Mammary epithelial cell (primary cell): ENCODE measurements at regions of chr9 and their contacts with region 1.

Region 1: DNA sequence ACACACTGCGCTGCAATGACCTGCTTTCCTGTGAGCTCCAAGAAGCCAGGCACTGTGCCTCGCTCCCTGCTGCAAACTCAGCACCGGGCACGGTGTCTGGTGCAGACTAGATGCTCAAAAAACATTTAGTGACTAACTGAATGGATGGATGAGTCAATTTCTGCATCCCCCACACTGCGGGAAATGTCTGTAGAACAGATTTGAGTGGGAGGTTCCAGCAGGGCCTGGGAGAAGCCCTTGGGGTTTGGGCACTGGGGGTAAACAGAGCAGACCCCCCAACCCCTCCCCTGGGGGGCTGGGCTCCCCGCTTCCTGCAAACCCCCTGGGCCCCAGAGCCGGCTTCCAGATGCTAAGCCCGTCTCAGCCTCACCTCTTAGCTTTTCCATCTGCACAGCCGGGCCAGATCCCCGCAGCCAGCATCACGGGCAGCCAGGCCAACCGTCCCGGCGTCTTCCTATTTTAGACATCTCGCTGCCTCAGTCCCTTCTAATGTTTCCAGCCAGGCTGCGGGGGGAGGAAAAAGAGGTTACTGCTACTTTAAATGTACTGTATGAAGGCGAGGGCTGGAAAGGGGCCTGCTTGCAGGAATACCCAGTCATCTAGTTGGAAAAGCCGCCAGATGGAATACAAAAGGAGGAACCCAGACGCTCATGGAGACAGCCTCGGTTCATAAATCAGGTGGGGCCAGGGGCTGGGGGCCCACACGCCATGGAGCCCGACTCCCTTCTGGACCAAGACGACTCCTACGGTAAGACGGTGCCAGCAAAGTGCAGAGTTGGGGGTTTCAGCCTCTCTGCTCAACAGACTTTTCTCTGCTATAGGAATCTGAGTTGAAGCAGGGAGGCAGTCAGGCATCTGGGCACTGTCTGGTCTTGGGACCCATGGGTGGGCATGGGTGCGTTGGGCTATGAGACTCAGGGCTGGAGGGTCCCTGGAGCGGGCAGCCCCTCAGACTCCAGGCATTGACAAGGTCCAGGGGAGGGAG is 67.1 kb upstream of the GGTA1 start:
- DNase-seq: peak; percentile 50
- H3K4me3 ChIP-seq: no peak overlapping the region
- H3K27ac ChIP-seq: no peak overlapping the region
- H3K4me1 ChIP-seq: peaks cover 11% of the 10 kb centered on the region
- H3K27me3 ChIP-seq: no peaks in the 10 kb centered on the region
- CTCF ChIP-seq: no peak

Region 2: DNA sequence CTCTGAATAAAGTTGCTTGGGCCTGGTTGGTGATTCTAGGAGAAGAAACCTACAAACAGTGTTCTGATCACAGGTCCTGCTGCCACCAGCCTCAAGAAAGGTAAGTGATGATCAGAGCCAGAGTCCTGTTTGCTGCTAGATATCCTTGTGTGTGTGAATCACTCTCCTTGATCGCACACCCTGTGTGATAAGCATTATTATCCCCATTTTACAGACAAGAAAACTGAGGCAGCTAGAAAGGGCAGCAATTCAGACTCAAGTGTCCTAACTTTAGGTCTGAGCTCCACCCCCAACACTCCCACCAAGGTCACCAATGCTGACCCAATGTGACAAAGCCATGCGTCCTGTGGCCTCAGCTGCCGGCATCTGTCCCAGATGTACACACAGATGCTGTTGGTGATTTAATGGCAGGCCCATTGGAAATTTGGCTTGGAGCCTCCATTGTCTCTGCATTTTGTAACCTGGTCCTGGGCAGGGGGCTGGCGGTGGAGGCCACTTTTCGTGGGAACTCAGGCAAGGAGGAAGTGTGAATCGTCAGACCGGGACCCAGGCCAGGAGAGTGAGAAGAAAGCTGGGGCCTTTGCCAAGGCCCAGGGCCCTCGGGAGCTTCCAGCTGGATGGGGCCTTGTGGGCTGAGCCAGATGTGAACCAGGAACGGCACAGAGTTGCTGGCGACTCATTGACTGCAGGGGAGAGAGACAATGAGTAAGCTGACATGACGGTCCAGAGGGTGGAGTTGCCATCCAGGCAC is 37.4 kb before region 1 on chr9:
- CTCF ChIA-PET with region 1: no interaction called
- dilution Hi-C with region 1: loop called (anchors 5 kb)
- in situ Hi-C with region 1: no loop called
- intact Hi-C with region 1: no loop called
- DNase-seq: peak; percentile 77
- H3K4me3 ChIP-seq: no peak overlapping the region
- H3K27ac ChIP-seq: no peak overlapping the region
- H3K4me1 ChIP-seq: peaks cover 6% of the 10 kb centered on the region
- H3K27me3 ChIP-seq: no peaks in the 10 kb centered on the region
- CTCF ChIP-seq: no peak

Region 3: DNA sequence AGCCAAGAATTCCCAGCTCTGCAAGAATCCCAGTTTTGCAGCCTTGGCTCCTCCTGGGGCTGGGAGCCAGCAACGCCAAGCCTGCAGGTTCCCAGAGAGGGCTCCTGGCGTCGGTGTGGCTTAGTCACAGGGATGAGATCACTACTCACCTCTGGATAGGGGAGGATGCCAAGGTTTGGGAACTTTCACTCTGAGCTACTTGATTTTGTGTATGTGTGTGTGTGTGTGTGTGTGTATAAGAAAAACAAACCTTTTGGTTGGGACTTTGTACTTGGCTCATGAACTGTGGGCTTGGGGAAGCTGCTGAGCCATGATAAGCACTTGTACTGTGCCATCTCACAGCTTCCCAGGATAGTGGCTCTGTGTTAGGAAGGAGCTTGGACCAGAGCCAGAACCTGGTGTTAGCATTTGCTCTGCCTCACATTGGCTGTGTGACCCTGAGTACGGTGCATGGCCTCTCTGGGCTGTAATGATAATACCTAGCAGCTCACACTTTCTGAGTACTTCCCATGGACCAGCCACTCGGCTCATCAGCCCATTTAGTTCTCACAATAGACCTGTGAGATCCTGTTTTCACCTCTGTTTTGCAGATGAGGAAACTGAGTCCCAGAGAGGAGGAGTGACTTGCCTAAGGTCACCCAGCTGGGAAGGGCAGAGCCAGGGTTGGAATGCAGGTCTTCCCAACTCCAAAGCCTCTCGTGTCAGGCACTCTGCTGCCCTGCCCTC is 43.2 kb after region 1 on chr9:
- CTCF ChIA-PET with region 1: no interaction called
- dilution Hi-C with region 1: no loop called
- in situ Hi-C with region 1: no loop called
- intact Hi-C with region 1: no loop called
- DNase-seq: peak; percentile 87
- H3K4me3 ChIP-seq: no peak overlapping the region
- H3K27ac ChIP-seq: no peak overlapping the region
- H3K4me1 ChIP-seq: peaks cover 10% of the 10 kb centered on the region
- H3K27me3 ChIP-seq: no peaks in the 10 kb centered on the region
- CTCF ChIP-seq: peak in 1 of 2 donors; percentile 15

Region 4: DNA sequence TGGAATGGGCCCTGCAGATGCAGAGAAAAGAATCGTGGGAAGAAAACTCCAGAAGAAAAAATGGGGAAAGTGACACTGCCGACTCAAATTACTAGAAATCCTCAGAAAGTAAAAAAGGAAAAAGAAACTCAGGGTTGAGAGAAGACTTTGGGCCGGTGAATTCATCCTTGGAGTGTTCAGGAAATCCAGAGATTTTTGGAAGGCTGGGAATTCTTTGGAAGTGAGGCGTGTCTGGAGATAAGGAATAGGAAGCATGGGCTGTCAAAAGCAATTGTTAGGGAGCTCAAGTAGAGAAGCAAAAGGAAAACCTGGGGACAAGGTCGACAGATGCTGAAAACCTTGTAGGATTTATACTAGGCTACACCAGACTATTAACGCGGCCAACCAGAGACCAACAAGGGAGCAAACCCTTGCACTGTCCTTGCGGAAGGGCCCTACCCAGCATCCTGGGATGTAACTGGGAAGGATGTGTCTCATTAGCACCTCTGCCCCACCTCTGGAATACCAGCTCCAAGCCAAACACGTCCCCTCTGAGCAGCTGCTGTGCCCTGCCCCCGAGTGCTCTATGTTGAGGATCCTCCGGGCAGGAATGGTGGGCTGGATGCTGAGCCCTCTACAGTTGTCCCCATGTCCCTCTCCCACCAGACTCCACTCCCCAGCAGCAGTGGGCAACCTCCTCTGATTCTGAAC is 96.3 kb after region 1 on chr9:
- CTCF ChIA-PET with region 1: no interaction called
- dilution Hi-C with region 1: loop called (anchors 5 kb)
- in situ Hi-C with region 1: no loop called
- intact Hi-C with region 1: no loop called
- DNase-seq: no peak
- H3K4me3 ChIP-seq: no peak overlapping the region
- H3K27ac ChIP-seq: no peak overlapping the region
- H3K4me1 ChIP-seq: no peaks in the 10 kb centered on the region
- H3K27me3 ChIP-seq: no peaks in the 10 kb centered on the region
- CTCF ChIP-seq: no peak